Activated naive CD4-positive, alpha-beta T cell treated with anti-CD3 and anti-CD28 coated beads, Interleukin-2, amount 10 ng/mL, durations not matched to agents 7 days and 5 days (primary cell): ENCODE measurements at regions of chr16 and their contacts with region 1.

Region 1: GRCh38 chr16:23435500-23435899 is 17.5 kb downstream of the COG7 start:
- DNase-seq: peak; percentile 81
- H3K4me3 Mint-ChIP-seq: no peak overlapping the region
- H3K27ac Mint-ChIP-seq: no peak overlapping the region
- H3K4me1 Mint-ChIP-seq: peaks cover 3% of the 10 kb centered on the region
- H3K27me3 Mint-ChIP-seq: no peaks in the 10 kb centered on the region

Region 2: GRCh38 chr16:23175667-23176066 is 259.8 kb before region 1 on chr16:
- CTCF ChIA-PET with region 1: interaction called, 89 read pairs
- DNase-seq: no peak
- H3K4me3 Mint-ChIP-seq: no peak overlapping the region
- H3K27ac Mint-ChIP-seq: no peak overlapping the region
- H3K4me1 Mint-ChIP-seq: no peaks in the 10 kb centered on the region
- H3K27me3 Mint-ChIP-seq: peaks cover 37% of the 10 kb centered on the region

Region 3: GRCh38 chr16:23182460-23183309 is 252.8 kb before region 1 on chr16 and contains the start of gene SCNN1G:
- CTCF ChIA-PET with region 1: interaction called, 89 read pairs
- DNase-seq: peak; percentile 84
- H3K4me3 Mint-ChIP-seq: no peak within 1 kb of the TSS
- H3K27ac Mint-ChIP-seq: no peak within 1 kb of the TSS
- H3K4me1 Mint-ChIP-seq: peaks cover 8% of the 10 kb centered on the region
- H3K27me3 Mint-ChIP-seq: peaks cover 79% of the 10 kb centered on the region

Region 4: DNA sequence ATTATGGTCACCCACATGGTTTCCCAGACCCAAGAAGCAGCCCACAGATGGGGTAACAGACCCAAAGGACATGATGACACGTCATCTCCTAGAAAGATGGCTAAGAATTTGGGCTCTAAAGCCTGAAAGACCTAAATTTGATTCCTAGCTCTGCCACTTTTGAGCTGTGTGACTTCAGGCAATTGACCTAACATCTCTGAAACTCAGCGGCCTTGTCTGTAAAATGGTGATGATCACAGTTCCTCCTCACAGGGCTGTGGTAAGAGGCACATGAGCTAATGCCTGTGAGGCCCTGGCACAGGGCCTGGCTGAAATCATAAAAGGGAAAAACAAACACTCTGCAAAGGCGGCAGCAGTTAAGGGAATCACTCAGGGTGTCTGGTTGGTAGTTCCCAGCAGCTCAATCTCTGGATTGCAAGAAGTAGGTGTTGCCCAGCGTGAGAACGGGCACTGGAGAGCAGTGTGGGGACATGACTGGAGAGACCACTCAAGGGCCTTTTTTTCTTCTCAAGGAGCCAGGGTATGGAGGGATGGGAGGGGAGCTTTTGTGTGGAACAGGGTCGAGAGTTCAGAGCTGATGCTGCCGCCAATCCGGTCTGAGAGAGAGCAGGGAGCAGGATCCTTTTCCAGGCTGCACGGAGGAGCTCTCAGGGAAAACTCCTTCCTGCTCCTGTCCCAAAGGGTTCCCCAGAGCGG is 118.4 kb before region 1 on chr16:
- CTCF ChIA-PET with region 1: no interaction called
- DNase-seq: no peak
- H3K4me3 Mint-ChIP-seq: no peak overlapping the region
- H3K27ac Mint-ChIP-seq: no peak overlapping the region
- H3K4me1 Mint-ChIP-seq: no peaks in the 10 kb centered on the region
- H3K27me3 Mint-ChIP-seq: peaks cover 4% of the 10 kb centered on the region

Region 5: DNA sequence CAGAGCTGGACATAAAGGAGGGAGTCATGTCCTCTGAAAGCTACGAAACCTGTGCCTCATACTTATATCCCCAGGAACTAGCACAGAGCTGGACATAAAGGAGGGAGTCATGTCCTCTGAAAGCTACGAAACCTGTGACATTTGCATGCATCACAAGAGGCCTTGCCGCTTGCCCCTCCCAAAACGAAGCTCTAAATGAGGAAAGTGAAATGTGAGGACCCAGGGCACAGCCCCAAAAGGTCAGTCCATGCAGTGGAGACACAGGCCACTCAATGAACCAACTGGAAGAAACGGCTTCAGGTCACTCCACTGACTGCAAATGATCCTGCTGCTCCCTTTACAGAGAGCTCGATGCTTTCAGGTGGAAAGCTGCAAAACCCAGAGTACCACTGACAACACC is 20.8 kb before region 1 on chr16:
- CTCF ChIA-PET with region 1: interaction called, 19 read pairs
- DNase-seq: no peak
- H3K4me3 Mint-ChIP-seq: no peak overlapping the region
- H3K27ac Mint-ChIP-seq: no peak overlapping the region
- H3K4me1 Mint-ChIP-seq: no peaks in the 10 kb centered on the region
- H3K27me3 Mint-ChIP-seq: no peaks in the 10 kb centered on the region

Region 6: DNA sequence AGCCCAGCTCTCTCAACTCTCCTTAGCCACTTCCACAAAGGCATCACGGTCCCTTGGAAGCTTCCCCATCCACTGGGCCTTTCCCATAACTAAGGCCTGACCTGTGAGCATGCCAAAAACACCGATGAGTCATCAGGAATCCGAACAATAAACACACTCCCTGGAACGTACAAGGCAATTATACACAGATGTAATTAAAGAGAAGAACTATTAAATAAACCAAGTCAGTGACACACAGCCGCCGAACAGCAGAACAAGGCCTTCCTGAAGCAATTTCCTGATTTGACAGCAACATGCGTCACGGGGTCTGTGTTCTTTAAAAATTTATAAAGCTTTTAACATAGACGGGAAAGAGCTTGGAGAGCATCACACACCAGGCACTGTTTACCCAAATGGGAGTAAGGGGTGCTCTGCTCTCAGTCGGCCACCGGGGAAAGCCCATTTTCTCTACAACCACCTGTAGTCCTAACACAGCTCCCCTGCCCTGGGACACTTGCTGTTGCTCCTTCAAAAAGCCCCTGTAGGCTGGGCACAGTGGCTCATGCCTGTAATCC is 11.9 kb before region 1 on chr16:
- CTCF ChIA-PET with region 1: interaction called, 25 read pairs
- DNase-seq: no peak
- H3K4me3 Mint-ChIP-seq: no peak overlapping the region
- H3K27ac Mint-ChIP-seq: no peak overlapping the region
- H3K4me1 Mint-ChIP-seq: no peaks in the 10 kb centered on the region
- H3K27me3 Mint-ChIP-seq: no peaks in the 10 kb centered on the region

Region 7: DNA sequence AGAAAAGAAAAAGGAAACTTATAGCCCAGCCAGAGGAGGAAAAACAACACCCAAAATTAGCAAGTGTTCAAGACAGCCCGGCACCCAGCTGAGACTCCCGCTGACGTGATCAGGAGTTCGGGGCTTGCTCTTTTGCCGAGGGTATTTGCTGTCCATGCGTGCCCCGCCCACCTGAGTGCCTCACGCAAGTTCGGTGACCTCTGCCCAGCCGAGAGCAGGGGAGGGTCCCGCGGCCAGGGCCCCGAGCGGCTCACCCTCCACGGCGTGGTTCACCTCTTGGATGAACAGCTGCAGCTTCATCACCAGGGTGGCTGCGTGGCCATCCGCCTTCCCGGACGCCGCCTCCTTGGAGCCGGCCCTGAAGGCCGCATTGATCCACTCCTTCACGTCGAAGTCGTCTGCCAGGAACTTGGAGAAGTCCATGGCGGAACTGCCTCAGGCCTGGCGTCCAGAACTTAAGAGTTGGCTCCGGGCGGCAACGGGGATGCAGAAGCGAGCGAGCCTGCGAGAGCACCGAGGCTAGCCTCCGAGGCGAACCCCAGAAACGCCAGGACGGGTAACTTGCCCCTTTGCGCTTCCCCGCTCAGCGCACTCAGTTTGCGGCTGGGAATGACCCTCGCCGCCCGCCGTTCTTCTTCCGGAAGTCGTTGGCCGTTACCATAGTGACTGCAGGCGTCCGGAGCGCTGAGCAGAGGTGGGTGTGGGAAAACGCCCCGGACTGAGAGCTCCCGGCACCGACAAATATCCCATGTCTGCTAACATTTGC is 17.3 kb after region 1 on chr16 and contains the start of gene COG7:
- CTCF ChIA-PET with region 1: interaction called, 22 read pairs
- DNase-seq: peak; percentile 91
- H3K4me3 Mint-ChIP-seq: peak within 1 kb of the TSS; percentile 92
- H3K27ac Mint-ChIP-seq: peak within 1 kb of the TSS; percentile 84
- H3K4me1 Mint-ChIP-seq: peaks cover 27% of the 10 kb centered on the region
- H3K27me3 Mint-ChIP-seq: no peaks in the 10 kb centered on the region

Region 8: GRCh38 chr16:23491490-23492391 is 56.2 kb after region 1 on chr16:
- CTCF ChIA-PET with region 1: interaction called, 10 read pairs
- DNase-seq: no peak
- H3K4me3 Mint-ChIP-seq: no peak overlapping the region
- H3K27ac Mint-ChIP-seq: no peak overlapping the region
- H3K4me1 Mint-ChIP-seq: peaks cover 5% of the 10 kb centered on the region
- H3K27me3 Mint-ChIP-seq: no peaks in the 10 kb centered on the region